Ovary (tissue), 10 donors: ENCODE measurements at regions of chr14 and their contacts with region 1.

Region 1: DNA sequence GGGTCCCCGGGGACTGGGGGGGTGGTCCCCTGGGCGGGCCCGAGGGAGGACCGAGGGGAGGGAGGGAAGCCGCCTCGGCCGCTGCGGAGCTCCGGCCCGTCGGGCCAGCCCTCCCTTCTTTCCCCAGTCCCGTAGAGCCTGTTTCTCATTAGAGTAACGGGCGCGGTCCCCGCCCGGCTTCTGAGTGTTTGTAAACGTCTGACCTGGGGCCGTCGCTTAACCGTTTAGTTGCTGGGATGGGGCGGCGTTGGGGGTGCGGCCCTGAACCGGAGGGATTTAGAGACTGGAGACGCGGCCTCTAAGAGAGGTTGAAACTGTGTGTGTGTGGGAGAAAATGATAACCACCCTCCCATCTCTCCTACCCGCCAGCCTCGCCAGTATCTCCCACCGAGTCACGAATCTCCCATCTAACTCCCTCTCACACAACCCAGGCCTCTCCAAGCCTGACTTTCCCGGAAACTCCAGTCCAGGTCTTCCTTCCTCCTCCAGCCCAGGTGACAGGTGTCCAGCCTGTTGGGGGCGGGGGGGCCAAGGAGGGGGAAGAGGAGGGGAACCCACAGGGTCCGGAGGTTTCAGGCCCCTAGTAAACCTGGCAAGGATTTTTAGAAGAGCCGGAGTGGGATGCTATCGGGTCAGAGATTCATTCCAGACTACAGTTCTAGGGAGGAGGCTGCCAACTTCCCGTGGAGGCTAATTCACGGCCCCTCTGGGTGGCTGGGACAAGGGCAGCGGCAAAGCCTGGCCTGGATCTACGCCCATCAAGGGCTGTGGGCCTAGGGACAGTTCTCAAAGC is 1.1 kb upstream of the NFATC4 start:
- DNase-seq: peak; percentile 95 to 97 (median 97)
- H3K4me3 ChIP-seq: peak overlapping the region; percentile 71
- H3K27ac ChIP-seq: peak overlapping the region; percentile 93 to 96
- H3K4me1 ChIP-seq: peaks cover 4% of the 10 kb centered on the region
- H3K27me3 ChIP-seq: no peaks in the 10 kb centered on the region
- CTCF ChIP-seq: no peak
- EP300 ChIP-seq: peak; percentile 73
- POLR2A ChIP-seq: peak; percentile 79

Region 2: GRCh38 chr14:24141097-24141880 is 225.6 kb before region 1 on chr14 and contains the start of gene EMC9:
- intact Hi-C with region 1: loop called in 1 of 4 experiments (anchors 10 kb)
- DNase-seq: peak; percentile 99 to 100 (median 100)
- H3K4me3 ChIP-seq: peak within 1 kb of the TSS; percentile 91
- H3K27ac ChIP-seq: peak within 1 kb of the TSS; percentile 63 to 86
- H3K4me1 ChIP-seq: peaks cover 17% of the 10 kb centered on the region
- H3K27me3 ChIP-seq: no peaks in the 10 kb centered on the region
- CTCF ChIP-seq: peak; percentile 55 to 89 (median 87)
- EP300 ChIP-seq: no peak
- POLR2A ChIP-seq: peak; percentile 80
- total RNA-seq, gene EMC9: 13.0 to 26.3 (median 17.3) TPM

Region 3: GRCh38 chr14:24332268-24332993 is 34.5 kb before region 1 on chr14:
- intact Hi-C with region 1: loop called in 1 of 4 experiments (anchors 5 kb)
- DNase-seq: peak; percentile 50 to 69 (median 66)
- H3K4me3 ChIP-seq: peak overlapping the region; percentile 20
- H3K27ac ChIP-seq: no peak overlapping the region
- H3K4me1 ChIP-seq: peaks cover 5% of the 10 kb centered on the region
- H3K27me3 ChIP-seq: no peaks in the 10 kb centered on the region
- CTCF ChIP-seq: peak; percentile 28 to 65 (median 63)
- EP300 ChIP-seq: no peak
- POLR2A ChIP-seq: no peak

Region 4: DNA sequence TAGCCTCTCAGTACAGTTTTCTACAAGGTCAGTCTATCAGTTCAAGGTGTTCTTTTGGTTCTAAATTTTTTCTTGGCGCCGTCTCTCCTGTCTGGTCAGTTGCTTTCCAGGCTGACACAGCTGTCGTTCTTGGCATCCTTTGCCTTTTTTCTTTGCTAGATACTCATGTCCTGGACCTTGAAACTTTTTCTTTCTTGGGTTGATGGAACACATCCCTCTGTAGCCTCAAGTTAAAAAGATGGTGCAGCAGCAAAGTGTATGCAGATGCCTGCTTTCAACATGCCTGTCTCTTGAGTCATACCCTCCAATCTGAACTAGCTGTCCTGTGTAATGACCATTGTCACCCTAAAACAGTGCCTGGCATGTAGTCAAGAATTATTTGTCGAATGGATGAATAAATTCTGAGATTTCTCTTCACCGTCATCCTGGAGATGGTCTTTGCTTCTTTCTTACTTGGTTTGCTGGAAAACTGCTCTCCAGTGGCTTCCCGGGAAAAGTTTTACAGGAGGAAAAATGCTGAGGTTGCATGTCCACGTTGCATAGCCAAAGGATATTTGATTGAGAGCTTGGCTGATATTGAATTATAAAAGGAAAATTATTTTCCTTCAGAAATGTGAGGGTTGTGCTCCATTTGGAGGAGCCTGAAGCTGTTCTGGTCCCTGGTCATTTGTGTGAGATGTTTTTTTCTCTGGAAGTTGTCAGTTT is 36.5 kb after region 1 on chr14:
- intact Hi-C with region 1: loop called in 3 of 4 experiments (anchors 5 kb)
- DNase-seq: peak; percentile 63 to 76 (median 69)
- H3K4me3 ChIP-seq: no peak overlapping the region
- H3K27ac ChIP-seq: peak overlapping the region in 1 of 2 donors; percentile 37
- H3K4me1 ChIP-seq: peaks cover 23% of the 10 kb centered on the region
- H3K27me3 ChIP-seq: no peaks in the 10 kb centered on the region
- CTCF ChIP-seq: no peak
- EP300 ChIP-seq: no peak
- POLR2A ChIP-seq: no peak

Region 5: GRCh38 chr14:24431569-24432258 is 64.8 kb after region 1 on chr14:
- intact Hi-C with region 1: loop called (anchors 1 to 2 kb)
- DNase-seq: peak; percentile 90 to 95 (median 92)
- H3K4me3 ChIP-seq: no peak overlapping the region
- H3K27ac ChIP-seq: peak overlapping the region in 1 of 2 donors; percentile 99
- H3K4me1 ChIP-seq: peaks cover 11% of the 10 kb centered on the region
- H3K27me3 ChIP-seq: no peaks in the 10 kb centered on the region
- CTCF ChIP-seq: peak; percentile 81 to 91 (median 88)
- EP300 ChIP-seq: no peak
- POLR2A ChIP-seq: no peak